AG04449 (cell line): ENCODE measurements at regions of chr6 and their contacts with region 1.

Region 1: GRCh38 chr6:134882426-134883038 is 67.4 kb downstream of the ALDH8A1 start:
- DNase-seq: peak; percentile 57
- H3K4me3 ChIP-seq: no peak overlapping the region
- CTCF ChIP-seq: peak; percentile 81

Region 2: DNA sequence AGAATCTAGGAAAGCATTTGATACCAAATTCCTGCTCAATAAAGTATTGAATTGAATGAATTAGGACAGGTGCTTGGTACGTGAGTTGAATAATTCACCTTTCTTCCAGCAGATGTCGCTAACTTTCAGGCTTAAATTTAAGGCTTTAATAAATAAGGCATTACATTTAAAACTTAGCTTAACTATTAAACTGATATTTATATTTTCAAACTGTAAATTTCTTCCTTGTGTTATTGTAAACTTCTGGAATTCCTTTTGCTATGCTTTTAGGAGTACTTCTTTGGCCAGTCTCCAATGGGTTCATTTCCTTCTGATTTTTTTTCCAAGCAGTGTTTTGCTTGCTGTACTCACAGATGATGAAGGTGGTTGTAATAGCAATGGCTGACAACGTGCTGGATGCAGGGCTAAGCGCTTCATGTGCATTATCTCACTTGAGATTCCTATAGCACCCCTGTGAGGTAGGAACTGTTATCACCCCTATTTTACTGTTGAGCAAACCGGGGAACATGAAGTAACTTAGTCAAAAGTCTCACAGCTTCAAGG is 758.8 kb before region 1 on chr6:
- CTCF ChIA-PET with region 1: interaction called, 77 read pairs
- POLR2A ChIA-PET with region 1: no interaction called
- DNase-seq: no peak
- H3K4me3 ChIP-seq: no peak overlapping the region
- CTCF ChIP-seq: peak; percentile 45

Region 3: DNA sequence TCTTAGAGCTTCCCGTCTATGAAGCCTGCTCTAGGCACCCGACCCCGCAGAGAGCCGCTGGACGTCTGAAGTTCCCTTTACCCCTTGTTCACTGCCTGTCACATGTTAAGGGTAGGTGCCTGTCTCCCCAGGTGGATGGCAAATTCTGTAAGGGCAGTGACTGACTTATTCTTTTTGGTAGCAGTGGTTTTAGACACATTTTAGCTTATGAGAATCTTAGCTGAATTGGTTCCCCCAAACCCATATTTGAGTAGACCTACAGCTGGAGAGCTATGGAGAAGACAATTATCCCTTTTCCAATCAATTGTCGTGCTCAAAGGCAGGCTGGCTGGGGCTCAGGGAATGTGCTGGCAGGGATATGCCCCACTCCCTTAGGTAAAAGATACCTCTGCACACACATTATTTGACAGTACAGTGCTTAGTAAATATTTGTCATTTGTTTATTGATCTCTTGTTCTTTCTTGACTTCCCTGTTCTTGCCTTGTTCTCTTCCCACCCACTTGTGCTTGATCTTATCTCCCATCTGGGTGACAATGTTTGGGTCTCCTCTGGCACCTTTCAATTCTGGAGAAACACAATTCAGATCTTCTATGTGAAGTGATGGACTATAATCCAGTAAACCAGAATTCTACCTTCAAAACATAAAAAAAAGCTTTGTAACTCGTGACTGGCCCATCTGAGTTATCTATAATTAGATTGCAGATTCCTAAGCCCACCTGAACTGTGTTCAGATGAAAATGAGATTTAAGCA is 715.8 kb before region 1 on chr6:
- CTCF ChIA-PET with region 1: interaction called, 33 read pairs
- POLR2A ChIA-PET with region 1: interaction called, 3 read pairs
- DNase-seq: no peak
- H3K4me3 ChIP-seq: no peak overlapping the region
- CTCF ChIP-seq: no peak

Region 4: GRCh38 chr6:134746140-134746539 is 136.4 kb before region 1 on chr6:
- CTCF ChIA-PET with region 1: no interaction called
- POLR2A ChIA-PET with region 1: no interaction called
- DNase-seq: no peak
- H3K4me3 ChIP-seq: no peak overlapping the region
- CTCF ChIP-seq: no peak

Region 5: GRCh38 chr6:134822920-134823709 is 59.4 kb before region 1 on chr6:
- CTCF ChIA-PET with region 1: interaction called, 49 read pairs
- POLR2A ChIA-PET with region 1: interaction called, 3 read pairs
- DNase-seq: no peak
- H3K4me3 ChIP-seq: no peak overlapping the region
- CTCF ChIP-seq: peak; percentile 79

Region 6: DNA sequence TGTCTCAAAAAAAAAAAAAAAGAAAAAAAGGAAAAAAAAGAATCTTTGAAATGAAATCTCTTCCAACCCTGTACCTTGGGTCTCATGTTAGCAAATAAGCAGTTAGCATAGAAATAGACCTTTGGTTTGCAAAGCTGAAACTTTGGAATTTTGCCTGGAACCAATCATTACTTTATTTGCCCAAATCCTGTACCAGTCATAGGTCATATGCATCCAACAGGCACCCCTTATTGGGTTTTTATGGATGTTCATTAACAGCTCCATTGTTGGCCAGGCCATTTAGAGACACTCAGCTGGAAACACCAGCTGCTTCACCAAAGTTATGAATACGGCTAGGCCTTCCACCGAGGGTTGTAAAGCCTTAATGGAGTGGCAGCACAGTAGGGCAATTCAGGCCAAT is 14.4 kb after region 1 on chr6:
- CTCF ChIA-PET with region 1: interaction called, 26 read pairs
- POLR2A ChIA-PET with region 1: no interaction called
- DNase-seq: no peak
- H3K4me3 ChIP-seq: no peak overlapping the region
- CTCF ChIP-seq: no peak